Sigmoid colon (tissue), 7 donors: ENCODE measurements at regions of chr17 and their contacts with region 1.

Region 1: DNA sequence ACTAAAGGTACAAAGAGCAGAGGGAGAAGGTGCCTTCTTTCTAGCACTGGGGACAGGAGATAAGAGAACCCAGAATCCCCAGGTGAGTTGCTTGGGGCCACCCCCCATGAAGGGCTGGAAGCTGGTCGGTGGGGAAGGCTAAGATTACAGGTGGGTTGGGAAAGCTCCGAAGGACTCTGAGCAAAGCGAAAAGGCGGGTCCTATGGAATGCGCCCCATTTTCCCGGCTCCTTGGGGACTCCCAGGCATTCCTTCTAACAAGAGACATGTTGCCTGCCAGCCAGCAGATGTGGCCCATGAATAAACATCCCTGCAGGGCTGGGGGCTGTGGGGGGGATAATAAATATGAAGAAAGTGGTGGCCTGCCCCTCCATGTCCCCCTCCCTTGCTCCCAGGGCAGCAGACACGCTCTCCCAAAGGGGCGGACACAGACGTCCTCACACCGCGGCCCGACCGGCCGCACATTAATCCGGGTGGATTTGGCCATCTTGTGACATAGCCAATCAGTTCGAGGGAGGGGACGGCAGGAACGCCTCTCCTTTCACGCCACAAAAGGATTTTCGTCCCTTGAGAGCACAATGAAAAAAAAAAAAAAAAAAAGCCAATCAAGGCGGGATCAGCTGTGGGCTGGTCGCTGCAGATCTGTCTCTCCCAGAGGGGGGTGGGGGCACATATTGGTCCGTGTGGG is 98.5 kb downstream of the SOX9 start:
- DNase-seq: no peak
- H3K4me3 ChIP-seq: no peak overlapping the region
- H3K27ac ChIP-seq: no peak overlapping the region
- H3K4me1 ChIP-seq: peaks cover 0 to 7% (median 4%) of the 10 kb centered on the region in 4 donors
- H3K27me3 ChIP-seq: peaks cover 0 to 28% (median 19%) of the 10 kb centered on the region in 3 donors
- CTCF ChIP-seq: no peak
- EP300 ChIP-seq: no peak
- POLR2A ChIP-seq: no peak

Region 2: GRCh38 chr17:72270273-72270950 is 51.1 kb after region 1 on chr17:
- intact Hi-C with region 1: loop called (anchors 10 kb)
- DNase-seq: no peak
- H3K4me3 ChIP-seq: no peak overlapping the region
- H3K27ac ChIP-seq: no peak overlapping the region
- H3K4me1 ChIP-seq: no peaks in the 10 kb centered on the region
- H3K27me3 ChIP-seq: no peaks in the 10 kb centered on the region
- CTCF ChIP-seq: no peak
- EP300 ChIP-seq: no peak
- POLR2A ChIP-seq: no peak